ENCODE measurements at regions of chr7 and their contacts with region 1.

Region 1: DNA sequence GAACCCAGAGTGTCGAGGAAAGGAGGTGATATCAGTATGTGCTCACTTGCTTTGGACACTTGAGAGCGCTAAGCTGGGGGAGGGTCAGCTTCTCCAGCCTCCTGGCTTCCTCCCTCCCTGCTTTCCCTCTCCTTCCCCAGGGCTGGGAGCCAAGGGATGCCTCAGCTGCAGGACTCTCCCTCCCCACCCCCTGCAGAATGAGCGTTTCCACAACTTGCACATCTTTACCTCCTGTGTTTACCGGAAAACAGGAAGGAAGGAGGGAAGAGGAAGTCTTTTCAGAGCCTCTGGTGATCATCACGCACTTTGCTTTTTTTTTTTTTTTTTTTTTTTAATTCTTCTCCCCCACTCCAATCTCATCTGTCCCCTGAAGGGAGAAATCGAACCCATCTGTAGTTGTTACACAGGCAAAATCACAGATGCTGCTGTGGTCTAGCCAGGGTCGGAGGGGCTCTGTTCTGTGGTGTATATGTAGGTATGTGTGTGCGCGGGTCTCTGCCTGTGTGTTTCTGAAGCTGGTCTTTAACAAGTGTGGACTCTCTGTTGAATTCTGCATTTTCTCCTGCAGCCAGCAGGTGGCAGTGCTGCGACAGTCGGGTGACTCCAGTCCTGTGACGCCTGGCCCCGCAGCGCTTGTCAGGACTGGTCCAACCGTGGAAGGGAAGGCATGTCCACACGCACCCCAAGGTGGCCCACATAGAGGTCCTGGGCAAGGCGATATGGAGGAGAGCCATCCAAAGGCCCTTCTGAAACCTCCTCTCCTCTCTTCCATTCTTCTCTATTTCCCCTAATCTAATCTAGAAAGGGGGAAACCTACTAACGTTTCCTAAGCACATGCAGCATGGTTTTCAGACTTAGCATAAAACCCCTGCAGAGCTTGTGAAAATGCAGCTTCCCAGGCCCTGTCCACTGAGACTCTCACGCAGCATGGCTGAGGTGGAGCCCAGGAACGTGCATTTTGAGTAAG is 257.6 kb downstream of the PLXNA4 start:
- DNase-seq: peak; percentile 69 to 92 (median 85)
- H3K4me3 ChIP-seq: no peak overlapping the region
- H3K27ac ChIP-seq: no peak overlapping the region
- H3K4me1 ChIP-seq: peaks cover 0 to 10% of the 10 kb centered on the region in 2 donors
- H3K27me3 ChIP-seq: peaks cover 15% of the 10 kb centered on the region
- CTCF ChIP-seq: peak; percentile 80 to 95 (median 89)
- POLR2A ChIP-seq: no peak

Region 2: GRCh38 chr7:132239422-132239994 is 79.1 kb before region 1 on chr7:
- intact Hi-C with region 1: no loop called
- DNase-seq: no peak
- H3K4me3 ChIP-seq: no peak overlapping the region
- H3K27ac ChIP-seq: no peak overlapping the region
- H3K4me1 ChIP-seq: no peaks in the 10 kb centered on the region
- H3K27me3 ChIP-seq: no peaks in the 10 kb centered on the region
- CTCF ChIP-seq: no peak
- POLR2A ChIP-seq: no peak

Region 3: DNA sequence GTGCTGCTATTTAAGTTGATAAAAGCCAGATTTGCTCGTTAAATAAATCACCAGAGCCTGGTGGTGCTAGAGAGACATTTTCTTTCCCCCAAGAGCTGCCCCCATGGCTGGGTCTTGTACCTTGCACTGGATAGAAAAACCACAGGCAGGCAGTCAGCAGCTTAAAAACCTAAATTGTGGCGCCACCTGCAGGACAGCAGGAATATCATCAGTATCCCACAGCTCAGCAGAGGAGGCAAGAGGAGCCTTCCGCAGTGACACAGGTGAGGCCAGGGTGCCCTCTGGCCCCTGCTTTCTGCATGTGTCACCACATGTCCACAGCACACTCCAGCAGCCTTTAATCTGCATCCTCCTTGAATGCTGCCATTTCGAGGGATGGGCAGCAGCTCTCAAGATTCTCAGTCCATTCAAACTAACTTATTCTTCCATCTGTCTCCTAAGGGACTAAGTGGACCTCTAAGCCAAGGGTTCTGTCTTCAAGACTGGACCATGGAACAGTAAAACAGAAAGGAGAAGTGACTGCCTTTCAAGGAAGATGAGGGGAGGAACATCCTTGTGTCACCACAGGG is 262.2 kb after region 1 on chr7:
- intact Hi-C with region 1: loop called (anchors 2 to 5 kb)
- DNase-seq: peak; percentile 51 to 88 (median 76)
- H3K4me3 ChIP-seq: no peak overlapping the region
- H3K27ac ChIP-seq: no peak overlapping the region
- H3K4me1 ChIP-seq: no peaks in the 10 kb centered on the region
- H3K27me3 ChIP-seq: peaks cover 9% of the 10 kb centered on the region
- CTCF ChIP-seq: peak; percentile 54 to 83 (median 74)
- POLR2A ChIP-seq: no peak

Measured in adrenal gland (tissue), 19 donors.